Panc1 (cell line): ENCODE measurements at regions of chr16 and their contacts with region 1.

Region 1: DNA sequence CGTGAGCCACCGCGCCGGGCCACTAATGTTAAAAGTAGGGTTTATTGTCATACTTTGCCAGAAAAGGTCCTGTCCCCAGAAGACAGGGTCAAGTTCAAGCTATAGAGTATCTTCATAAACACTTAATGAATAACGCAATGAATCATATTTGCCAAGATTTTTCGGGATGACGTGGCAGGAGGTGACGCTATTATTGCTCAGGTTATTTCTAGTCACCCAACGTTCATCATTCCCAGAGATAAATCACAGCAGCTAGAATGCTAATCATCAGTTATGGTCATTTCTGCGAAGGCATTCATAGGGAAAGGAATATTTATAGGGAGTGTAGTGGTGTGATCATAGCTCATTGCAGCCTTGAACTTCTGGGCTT is 2.0 kb downstream of the TMC5 start:
- DNase-seq: peak; percentile 98
- ATAC-seq: peak; percentile 88
- H3K4me3 ChIP-seq: peak overlapping the region; percentile 23 to 46
- H3K27ac ChIP-seq: no peak overlapping the region
- H3K4me1 ChIP-seq: no peaks in the 10 kb centered on the region
- H3K27me3 ChIP-seq: no peaks in the 10 kb centered on the region
- CTCF ChIP-seq: no peak

Region 2: DNA sequence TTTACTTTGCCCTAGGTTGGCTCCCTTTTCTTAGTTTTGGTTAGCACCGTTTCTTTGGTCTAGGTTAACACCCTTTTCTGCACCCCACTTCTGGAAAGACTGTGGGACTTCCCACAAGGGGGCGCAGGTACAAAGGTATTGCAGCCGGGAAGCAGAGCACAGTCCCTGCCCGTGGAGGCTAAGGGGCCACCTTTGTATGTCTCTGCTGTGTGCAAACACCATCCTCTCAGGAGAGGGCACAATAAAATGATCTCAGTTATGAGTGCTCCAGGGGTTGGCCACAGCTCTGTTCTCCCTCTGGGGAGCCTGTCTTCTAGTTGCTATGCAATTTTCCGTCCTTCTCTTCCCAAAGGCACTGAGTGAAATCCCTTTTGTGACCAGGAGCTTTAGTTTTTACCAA is 30.4 kb before region 1 on chr16:
- CTCF ChIA-PET with region 1: interaction called, 12 read pairs
- POLR2A ChIA-PET with region 1: no interaction called
- in situ Hi-C with region 1: no loop called
- intact Hi-C with region 1: no loop called
- DNase-seq: no peak
- ATAC-seq: peak; percentile 96
- H3K4me3 ChIP-seq: no peak overlapping the region
- H3K27ac ChIP-seq: no peak overlapping the region
- H3K4me1 ChIP-seq: no peaks in the 10 kb centered on the region; the same call in 1 of the 2 replicates
- H3K27me3 ChIP-seq: 0 out of 2 replicates have a peak, but pooled peaks cover 2% of the 10 kb centered on the region
- CTCF ChIP-seq: peak; percentile 88

Region 3: GRCh38 chr16:19432429-19432828 is 12.8 kb after region 1 on chr16:
- CTCF ChIA-PET with region 1: interaction called, 4 read pairs
- POLR2A ChIA-PET with region 1: interaction called, 10 read pairs
- in situ Hi-C with region 1: no loop called
- intact Hi-C with region 1: no loop called
- DNase-seq: no peak
- ATAC-seq: no peak
- H3K4me3 ChIP-seq: no peak overlapping the region
- H3K27ac ChIP-seq: no peak overlapping the region
- H3K4me1 ChIP-seq: no peaks in the 10 kb centered on the region
- H3K27me3 ChIP-seq: no peaks in the 10 kb centered on the region
- CTCF ChIP-seq: no peak

Region 4: GRCh38 chr16:19636436-19637270 is 217.0 kb after region 1 on chr16:
- CTCF ChIA-PET with region 1: no interaction called
- POLR2A ChIA-PET with region 1: no interaction called
- in situ Hi-C with region 1: no loop called
- intact Hi-C with region 1: no loop called
- DNase-seq: no peak
- ATAC-seq: no peak
- H3K4me3 ChIP-seq: no peak overlapping the region
- H3K27ac ChIP-seq: no peak overlapping the region
- H3K4me1 ChIP-seq: no peaks in the 10 kb centered on the region
- H3K27me3 ChIP-seq: no peaks in the 10 kb centered on the region
- CTCF ChIP-seq: no peak